Naive thymus-derived CD4-positive, alpha-beta T cell (primary cell): ENCODE measurements at regions of chr9 and their contacts with region 1.

Region 1: GRCh38 chr9:114930056-114930812 is at the start of gene TNFSF8:
- DNase-seq: peak; percentile 22 to 89 (median 82)
- ATAC-seq: peak; percentile 93
- H3K4me3 ChIP-seq: peak within 1 kb of the TSS; percentile 87
- H3K4me3 Mint-ChIP-seq: peak within 1 kb of the TSS; percentile 78 to 100 (median 99)
- H3K27ac ChIP-seq: peak within 1 kb of the TSS; percentile 79
- H3K27ac Mint-ChIP-seq: peak within 1 kb of the TSS; percentile 93 to 100 (median 99)
- H3K4me1 ChIP-seq: peaks cover 21 to 27% of the 10 kb centered on the region in 2 donors
- H3K4me1 Mint-ChIP-seq: peaks cover 34 to 62% (median 51%) of the 10 kb centered on the region in 7 donors
- H3K27me3 ChIP-seq: no peaks in the 10 kb centered on the region
- H3K27me3 Mint-ChIP-seq: peaks cover 0 to 4% (median 0%) of the 10 kb centered on the region in 5 donors
- total RNA-seq, gene TNFSF8: 19.3 to 129 (median 31.5) TPM

Region 2: DNA sequence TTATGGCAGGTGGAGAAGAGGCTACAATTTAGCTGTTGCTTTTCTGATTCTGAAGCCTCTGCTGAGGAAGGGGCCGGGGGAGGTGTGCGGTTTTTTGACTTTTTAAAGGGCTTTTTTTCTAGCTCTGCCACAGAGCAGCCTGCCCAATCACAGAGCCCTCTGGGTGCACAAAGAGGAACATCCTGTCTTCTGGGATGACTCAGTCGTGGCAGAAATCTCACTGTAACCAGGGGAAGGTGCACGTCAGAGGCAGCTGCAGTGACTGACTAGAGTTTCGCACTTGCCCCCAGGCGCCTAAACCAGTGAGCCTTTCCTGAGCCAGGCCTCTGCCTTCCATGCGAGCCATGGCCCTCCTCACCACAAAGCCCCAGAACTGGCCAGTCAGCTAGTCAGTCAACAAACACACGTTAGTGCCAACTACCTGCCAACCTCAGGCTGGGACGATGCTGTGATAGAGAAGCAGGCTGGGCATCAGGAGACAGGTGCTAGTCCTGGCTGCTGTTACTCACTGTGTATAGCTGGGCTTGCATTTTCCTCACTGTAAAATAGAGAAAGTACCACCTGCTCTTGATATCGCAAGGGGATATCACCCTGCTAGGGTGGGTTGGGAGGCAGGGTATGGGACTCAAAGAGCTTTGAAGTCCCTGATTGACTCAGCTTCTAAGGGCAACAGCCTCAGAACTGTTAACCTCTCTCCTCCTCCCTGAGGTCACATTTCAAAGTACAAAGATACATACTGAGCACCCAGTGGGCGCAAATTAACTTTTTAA is 544.6 kb before region 1 on chr9:
- CTCF ChIA-PET with region 1: no interaction called
- POLR2A ChIA-PET with region 1: interaction called, 4 read pairs
- intact Hi-C with region 1: loop called in 1 of 2 experiments (anchors 2 kb)
- DNase-seq: peak; percentile 68 to 96 (median 93)
- ATAC-seq: peak; percentile 88
- H3K4me3 ChIP-seq: peak overlapping the region; percentile 63
- H3K4me3 Mint-ChIP-seq: peak overlapping the region; percentile 89 to 100 (median 96)
- H3K27ac ChIP-seq: peak overlapping the region; percentile 87
- H3K27ac Mint-ChIP-seq: peak overlapping the region; percentile 88 to 100 (median 96)
- H3K4me1 ChIP-seq: peaks cover 72 to 75% of the 10 kb centered on the region in 2 donors
- H3K4me1 Mint-ChIP-seq: peaks cover 61 to 77% (median 70%) of the 10 kb centered on the region in 7 donors
- H3K27me3 ChIP-seq: no peaks in the 10 kb centered on the region
- H3K27me3 Mint-ChIP-seq: no peaks in the 10 kb centered on the region

Region 3: GRCh38 chr9:114587385-114588202 is 342.6 kb before region 1 on chr9 and contains the start of gene ATP6V1G1:
- CTCF ChIA-PET with region 1: interaction called, 3 read pairs
- POLR2A ChIA-PET with region 1: interaction called, 5 read pairs
- intact Hi-C with region 1: loop called (anchors 5 to 10 kb)
- DNase-seq: peak; percentile 93 to 99 (median 97)
- ATAC-seq: peak; percentile 97
- H3K4me3 ChIP-seq: peak within 1 kb of the TSS; percentile 94
- H3K4me3 Mint-ChIP-seq: peak within 1 kb of the TSS; percentile 95 to 99 (median 98)
- H3K27ac ChIP-seq: peak within 1 kb of the TSS; percentile 99
- H3K27ac Mint-ChIP-seq: peak within 1 kb of the TSS; percentile 91 to 100 (median 99)
- H3K4me1 ChIP-seq: peaks cover 33 to 35% of the 10 kb centered on the region in 2 donors
- H3K4me1 Mint-ChIP-seq: peaks cover 43 to 53% (median 49%) of the 10 kb centered on the region in 7 donors
- H3K27me3 ChIP-seq: no peaks in the 10 kb centered on the region
- H3K27me3 Mint-ChIP-seq: peaks cover 0 to 6% (median 0%) of the 10 kb centered on the region in 5 donors
- total RNA-seq, gene ATP6V1G1: 86.2 to 136 (median 130) TPM

Region 4: GRCh38 chr9:114691046-114691955 is 238.9 kb before region 1 on chr9:
- CTCF ChIA-PET with region 1: no interaction called
- POLR2A ChIA-PET with region 1: no interaction called
- intact Hi-C with region 1: loop called in 1 of 2 experiments (anchors 1 kb)
- DNase-seq: peak in 5 of 9 donors; percentile 4 to 66 (median 6)
- ATAC-seq: peak; percentile 84
- H3K4me3 ChIP-seq: peak overlapping the region; percentile 2
- H3K4me3 Mint-ChIP-seq: peak overlapping the region in 8 of 10 donors; percentile 0 to 66 (median 12)
- H3K27ac ChIP-seq: no peak overlapping the region
- H3K27ac Mint-ChIP-seq: peak overlapping the region in 4 of 9 donors; percentile 64 to 91 (median 80)
- H3K4me1 ChIP-seq: peaks cover 0 to 24% of the 10 kb centered on the region in 2 donors
- H3K4me1 Mint-ChIP-seq: peaks cover 6 to 90% (median 12%) of the 10 kb centered on the region in 7 donors
- H3K27me3 ChIP-seq: no peaks in the 10 kb centered on the region
- H3K27me3 Mint-ChIP-seq: no peaks in the 10 kb centered on the region

Region 5: GRCh38 chr9:114894801-114895433 is 35.3 kb before region 1 on chr9:
- CTCF ChIA-PET with region 1: interaction called, 5 read pairs
- POLR2A ChIA-PET with region 1: interaction called, 34 read pairs
- intact Hi-C with region 1: loop called (anchors 1 kb)
- DNase-seq: no peak
- ATAC-seq: peak; percentile 27
- H3K4me3 ChIP-seq: no peak overlapping the region
- H3K4me3 Mint-ChIP-seq: peak overlapping the region in 7 of 10 donors; percentile 11 to 73 (median 34)
- H3K27ac ChIP-seq: no peak overlapping the region
- H3K27ac Mint-ChIP-seq: peak overlapping the region in 7 of 9 donors; percentile 24 to 87 (median 48)
- H3K4me1 ChIP-seq: peaks cover 56 to 73% of the 10 kb centered on the region in 2 donors
- H3K4me1 Mint-ChIP-seq: peaks cover 17 to 54% (median 32%) of the 10 kb centered on the region in 7 donors
- H3K27me3 ChIP-seq: no peaks in the 10 kb centered on the region
- H3K27me3 Mint-ChIP-seq: no peaks in the 10 kb centered on the region

Region 6: GRCh38 chr9:114919611-114920010 is 10.6 kb before region 1 on chr9:
- CTCF ChIA-PET with region 1: interaction called, 6 read pairs
- POLR2A ChIA-PET with region 1: interaction called, 13 read pairs
- intact Hi-C with region 1: loop called in 1 of 2 experiments (anchors 1 kb)
- DNase-seq: no peak
- ATAC-seq: no peak
- H3K4me3 ChIP-seq: no peak overlapping the region
- H3K4me3 Mint-ChIP-seq: peak overlapping the region in 5 of 10 donors; percentile 23 to 97 (median 41)
- H3K27ac ChIP-seq: no peak overlapping the region
- H3K27ac Mint-ChIP-seq: peak overlapping the region in 8 of 9 donors; percentile 24 to 83 (median 40)
- H3K4me1 ChIP-seq: peaks cover 40 to 49% of the 10 kb centered on the region in 2 donors
- H3K4me1 Mint-ChIP-seq: peaks cover 41 to 100% (median 94%) of the 10 kb centered on the region in 7 donors
- H3K27me3 ChIP-seq: no peaks in the 10 kb centered on the region
- H3K27me3 Mint-ChIP-seq: no peaks in the 10 kb centered on the region

Region 7: DNA sequence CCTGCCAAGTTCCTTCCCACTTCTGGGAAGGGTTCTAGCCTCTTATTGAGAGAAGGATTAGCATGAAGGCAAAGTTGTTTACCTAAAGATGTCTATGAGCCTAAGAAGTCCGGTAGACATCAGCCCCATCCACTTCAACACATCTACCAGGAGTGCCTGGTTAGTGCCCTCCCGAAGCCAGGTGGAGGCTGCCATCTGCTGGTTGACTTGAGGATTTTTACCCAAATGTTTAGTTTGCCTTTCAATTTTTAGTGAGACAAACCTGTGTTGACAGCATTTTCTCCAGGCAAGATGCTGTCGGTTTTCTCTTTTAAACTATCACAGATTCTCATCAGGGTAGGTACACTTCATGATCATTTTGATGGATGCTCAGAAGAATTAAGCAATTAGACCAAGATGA is 83.8 kb after region 1 on chr9:
- CTCF ChIA-PET with region 1: interaction called, 8 read pairs
- POLR2A ChIA-PET with region 1: no interaction called
- intact Hi-C with region 1: loop called (anchors 1 to 2 kb)
- DNase-seq: peak; percentile 57 to 84 (median 79)
- ATAC-seq: peak; percentile 88
- H3K4me3 ChIP-seq: no peak overlapping the region
- H3K4me3 Mint-ChIP-seq: peak overlapping the region in 1 of 10 donors; percentile 24
- H3K27ac ChIP-seq: no peak overlapping the region
- H3K27ac Mint-ChIP-seq: peak overlapping the region in 2 of 9 donors; percentile 12 to 79
- H3K4me1 ChIP-seq: peaks cover 0 to 4% of the 10 kb centered on the region in 2 donors
- H3K4me1 Mint-ChIP-seq: peaks cover 5 to 59% (median 12%) of the 10 kb centered on the region in 7 donors
- H3K27me3 ChIP-seq: no peaks in the 10 kb centered on the region
- H3K27me3 Mint-ChIP-seq: peaks cover 4 to 14% (median 7%) of the 10 kb centered on the region in 5 donors